Naive thymus-derived CD4-positive, alpha-beta T cell (primary cell): ENCODE measurements at regions of chr5 and their contacts with region 1.

Region 1: DNA sequence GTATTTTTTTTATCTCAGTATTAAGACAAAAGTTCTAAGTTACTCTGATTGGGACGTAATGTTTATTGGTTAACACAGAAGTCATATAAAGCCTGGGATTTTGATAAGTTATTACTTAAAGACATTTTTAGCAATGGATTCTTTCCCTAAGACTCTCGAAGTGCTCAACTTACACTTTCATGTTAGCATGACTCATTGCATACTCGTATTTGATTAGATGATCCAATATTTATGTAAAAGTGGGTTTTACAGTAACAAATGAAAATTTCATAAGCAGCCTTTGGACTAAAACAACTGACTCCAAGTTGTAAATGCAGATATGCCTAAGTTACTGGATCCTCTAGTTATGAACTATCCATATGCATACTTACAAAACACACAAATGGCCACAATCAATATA is 567.7 kb upstream of the NUDT12 start:
- DNase-seq: no peak
- ATAC-seq: no peak
- H3K4me3 ChIP-seq: no peak overlapping the region
- H3K4me3 Mint-ChIP-seq: no peak overlapping the region
- H3K27ac ChIP-seq: no peak overlapping the region
- H3K27ac Mint-ChIP-seq: no peak overlapping the region
- H3K4me1 ChIP-seq: no peaks in the 10 kb centered on the region
- H3K4me1 Mint-ChIP-seq: no peaks in the 10 kb centered on the region
- H3K27me3 ChIP-seq: no peaks in the 10 kb centered on the region
- H3K27me3 Mint-ChIP-seq: no peaks in the 10 kb centered on the region

Region 2: GRCh38 chr5:103774721-103775120 is 355.6 kb before region 1 on chr5:
- CTCF ChIA-PET with region 1: no interaction called
- POLR2A ChIA-PET with region 1: no interaction called
- intact Hi-C with region 1: no loop called
- DNase-seq: no peak
- ATAC-seq: no peak
- H3K4me3 ChIP-seq: no peak overlapping the region
- H3K4me3 Mint-ChIP-seq: no peak overlapping the region
- H3K27ac ChIP-seq: no peak overlapping the region
- H3K27ac Mint-ChIP-seq: no peak overlapping the region
- H3K4me1 ChIP-seq: no peaks in the 10 kb centered on the region
- H3K4me1 Mint-ChIP-seq: no peaks in the 10 kb centered on the region
- H3K27me3 ChIP-seq: no peaks in the 10 kb centered on the region
- H3K27me3 Mint-ChIP-seq: no peaks in the 10 kb centered on the region

Region 3: DNA sequence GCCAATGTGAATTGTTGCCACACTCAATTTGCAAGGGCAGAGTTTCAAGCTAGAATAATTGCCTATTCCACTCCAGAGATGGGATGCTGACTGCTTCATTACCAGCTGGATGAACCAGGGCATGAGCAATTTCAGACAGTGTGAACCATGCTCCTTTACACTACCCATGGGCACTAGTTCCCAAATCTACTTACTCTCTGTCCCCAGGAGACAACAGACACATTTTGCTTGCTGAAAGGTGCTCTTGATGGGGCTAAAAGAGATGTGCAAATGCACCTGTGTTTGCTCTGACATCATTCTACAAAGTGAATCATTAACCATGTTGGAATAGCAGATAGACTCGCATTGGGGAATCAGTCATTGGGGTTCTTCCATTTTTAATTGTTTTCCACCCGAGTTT is 45.4 kb before region 1 on chr5:
- CTCF ChIA-PET with region 1: no interaction called
- POLR2A ChIA-PET with region 1: no interaction called
- intact Hi-C with region 1: loop called in 1 of 2 experiments (anchors 1 kb)
- DNase-seq: no peak
- ATAC-seq: no peak
- H3K4me3 ChIP-seq: no peak overlapping the region
- H3K4me3 Mint-ChIP-seq: no peak overlapping the region
- H3K27ac ChIP-seq: no peak overlapping the region
- H3K27ac Mint-ChIP-seq: no peak overlapping the region
- H3K4me1 ChIP-seq: no peaks in the 10 kb centered on the region
- H3K4me1 Mint-ChIP-seq: no peaks in the 10 kb centered on the region
- H3K27me3 ChIP-seq: no peaks in the 10 kb centered on the region
- H3K27me3 Mint-ChIP-seq: no peaks in the 10 kb centered on the region